CD8-positive, alpha-beta T cell (primary cell): ENCODE measurements at regions of chr19 and their contacts with region 1.

Region 1: DNA sequence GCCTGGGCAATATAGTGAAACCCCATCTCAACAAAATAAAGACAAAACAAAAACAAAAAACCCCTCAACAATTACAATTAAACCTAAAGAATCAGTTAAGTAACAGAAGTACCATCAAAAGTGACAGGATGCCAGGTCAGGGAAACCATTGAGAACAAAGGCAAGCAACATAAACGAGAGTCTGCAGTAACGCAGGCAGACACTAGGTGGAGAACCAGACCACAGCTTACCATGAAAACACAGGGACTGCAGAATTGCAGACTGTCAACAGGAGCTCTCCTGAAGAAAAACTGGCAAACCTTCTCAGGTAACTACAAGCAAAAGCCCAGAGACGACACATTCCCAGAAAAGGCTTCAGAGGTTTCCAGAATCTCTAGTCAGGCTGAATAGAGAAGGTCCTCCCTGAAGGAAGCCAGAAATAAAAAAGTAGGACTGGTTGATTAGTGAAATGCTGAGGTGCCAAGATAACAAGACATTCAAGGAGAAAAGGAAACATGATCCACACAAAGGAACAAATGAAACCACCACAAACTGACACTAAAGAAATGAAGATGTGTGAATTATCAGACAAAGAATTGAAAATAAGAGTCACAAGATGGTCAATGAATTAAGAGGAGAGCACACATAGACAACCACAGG is 2.2 kb upstream of the ZNF665 start:
- DNase-seq: peak; percentile 48 to 86 (median 75)
- ATAC-seq: peak; percentile 50
- H3K4me3 ChIP-seq: no peak overlapping the region
- H3K4me3 Mint-ChIP-seq: peak overlapping the region; percentile 19
- H3K27ac ChIP-seq: no peak overlapping the region
- H3K27ac Mint-ChIP-seq: peak overlapping the region; percentile 24
- H3K4me1 ChIP-seq: peaks cover 16% of the 10 kb centered on the region
- H3K4me1 Mint-ChIP-seq: peaks cover 48% of the 10 kb centered on the region
- H3K27me3 ChIP-seq: no peaks in the 10 kb centered on the region
- H3K27me3 Mint-ChIP-seq: no peaks in the 10 kb centered on the region
- CTCF ChIP-seq: peak; percentile 90

Region 2: GRCh38 chr19:52942386-52943133 is 252.8 kb before region 1 on chr19:
- CTCF ChIA-PET with region 1: no interaction called
- POLR2A ChIA-PET with region 1: no interaction called
- intact Hi-C with region 1: loop called in 1 of 2 experiments (anchors 5 kb)
- DNase-seq: peak; percentile 91 to 97 (median 95)
- ATAC-seq: peak; percentile 99
- H3K4me3 ChIP-seq: peak overlapping the region; percentile 88 to 91
- H3K4me3 Mint-ChIP-seq: peak overlapping the region; percentile 95
- H3K27ac ChIP-seq: peak overlapping the region; percentile 66 to 86
- H3K27ac Mint-ChIP-seq: peak overlapping the region; percentile 93
- H3K4me1 ChIP-seq: peaks cover 7% of the 10 kb centered on the region
- H3K4me1 Mint-ChIP-seq: peaks cover 28% of the 10 kb centered on the region
- H3K27me3 ChIP-seq: no peaks in the 10 kb centered on the region
- H3K27me3 Mint-ChIP-seq: no peaks in the 10 kb centered on the region
- CTCF ChIP-seq: no peak

Region 3: GRCh38 chr19:52993323-52994178 is 201.8 kb before region 1 on chr19:
- CTCF ChIA-PET with region 1: interaction called, 3 read pairs
- POLR2A ChIA-PET with region 1: no interaction called
- intact Hi-C with region 1: loop called (anchors 5 kb)
- DNase-seq: peak; percentile 64 to 84 (median 77)
- ATAC-seq: peak; percentile 96
- H3K4me3 ChIP-seq: peak overlapping the region; percentile 38 to 65
- H3K4me3 Mint-ChIP-seq: peak overlapping the region; percentile 90
- H3K27ac ChIP-seq: no peak overlapping the region
- H3K27ac Mint-ChIP-seq: peak overlapping the region; percentile 60
- H3K4me1 ChIP-seq: peaks cover 6% of the 10 kb centered on the region
- H3K4me1 Mint-ChIP-seq: peaks cover 23% of the 10 kb centered on the region
- H3K27me3 ChIP-seq: no peaks in the 10 kb centered on the region
- H3K27me3 Mint-ChIP-seq: peaks cover 4% of the 10 kb centered on the region
- CTCF ChIP-seq: peak; percentile 81

Region 4: DNA sequence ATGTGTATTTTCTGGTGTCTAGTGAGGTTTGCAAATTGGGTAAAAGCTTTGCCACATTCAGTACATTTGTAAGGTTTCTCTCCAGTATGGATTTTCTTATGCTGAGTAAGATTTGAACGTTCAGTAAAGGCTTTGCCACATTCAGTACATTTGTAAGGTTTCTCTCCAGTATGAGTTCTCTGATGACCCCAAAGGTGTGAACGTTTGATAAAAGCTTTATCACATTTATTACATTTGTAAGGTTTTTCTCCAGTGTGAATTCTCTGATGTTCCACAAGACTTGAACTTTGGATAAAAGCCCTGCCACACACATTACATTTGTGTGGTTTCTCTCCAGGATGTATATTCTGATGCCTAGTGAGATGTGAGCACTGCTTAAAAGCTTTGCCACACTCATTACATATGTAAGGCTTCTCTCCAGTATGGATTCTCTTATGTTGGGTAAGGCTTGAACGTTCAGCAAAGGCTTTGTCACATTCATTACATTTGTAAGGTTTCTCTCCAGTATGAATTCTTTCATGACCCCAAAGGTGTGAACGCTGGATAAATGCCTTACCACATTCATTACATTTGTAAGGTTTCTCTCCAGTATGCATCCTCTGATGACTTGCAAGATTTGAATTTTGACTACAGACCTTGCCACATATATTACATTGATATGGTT is 41.9 kb after region 1 on chr19:
- CTCF ChIA-PET with region 1: no interaction called
- POLR2A ChIA-PET with region 1: no interaction called
- intact Hi-C with region 1: no loop called
- DNase-seq: no peak
- ATAC-seq: no peak
- H3K4me3 ChIP-seq: no peak overlapping the region
- H3K4me3 Mint-ChIP-seq: no peak overlapping the region
- H3K27ac ChIP-seq: no peak overlapping the region
- H3K27ac Mint-ChIP-seq: no peak overlapping the region
- H3K4me1 ChIP-seq: no peaks in the 10 kb centered on the region
- H3K4me1 Mint-ChIP-seq: no peaks in the 10 kb centered on the region
- H3K27me3 ChIP-seq: no peaks in the 10 kb centered on the region
- H3K27me3 Mint-ChIP-seq: no peaks in the 10 kb centered on the region
- CTCF ChIP-seq: no peak

Region 5: GRCh38 chr19:53254411-53255341 is 59.3 kb after region 1 on chr19 and contains the start of gene ZNF677:
- CTCF ChIA-PET with region 1: no interaction called
- POLR2A ChIA-PET with region 1: no interaction called
- intact Hi-C with region 1: loop called (anchors 1 to 5 kb)
- DNase-seq: peak; percentile 60 to 90 (median 82)
- ATAC-seq: peak; percentile 99
- H3K4me3 ChIP-seq: peak within 1 kb of the TSS; percentile 75 to 98
- H3K4me3 Mint-ChIP-seq: peak within 1 kb of the TSS; percentile 84
- H3K27ac ChIP-seq: peak within 1 kb of the TSS in 1 of 2 experiments; percentile 75
- H3K27ac Mint-ChIP-seq: peak within 1 kb of the TSS; percentile 81
- H3K4me1 ChIP-seq: peaks cover 11% of the 10 kb centered on the region
- H3K4me1 Mint-ChIP-seq: peaks cover 9% of the 10 kb centered on the region
- H3K27me3 ChIP-seq: no peaks in the 10 kb centered on the region
- H3K27me3 Mint-ChIP-seq: no peaks in the 10 kb centered on the region
- CTCF ChIP-seq: no peak
- total RNA-seq, gene ZNF677: 7.8 to 8.3 TPM

Region 6: DNA sequence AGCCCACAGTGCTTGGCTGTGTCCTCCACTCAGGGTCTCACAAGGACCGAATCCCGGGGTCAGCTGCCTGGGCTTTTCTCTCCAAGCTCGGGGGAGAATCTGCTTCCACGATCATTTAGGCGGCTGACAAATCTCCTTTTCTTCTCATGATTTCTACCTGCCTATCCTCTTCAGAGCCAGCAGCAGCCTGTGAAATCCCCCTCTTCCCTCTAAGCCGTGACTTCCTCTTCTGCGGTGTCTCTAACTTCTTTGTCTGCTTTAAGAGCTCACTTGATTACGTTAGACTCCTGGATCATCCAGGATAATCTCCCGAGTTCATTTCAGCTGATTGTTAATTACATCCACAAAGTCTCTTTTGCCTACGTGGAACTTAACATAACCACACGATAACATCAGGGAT is 115.7 kb after region 1 on chr19:
- CTCF ChIA-PET with region 1: no interaction called
- POLR2A ChIA-PET with region 1: no interaction called
- intact Hi-C with region 1: no loop called
- DNase-seq: no peak
- ATAC-seq: no peak
- H3K4me3 ChIP-seq: no peak overlapping the region
- H3K4me3 Mint-ChIP-seq: no peak overlapping the region
- H3K27ac ChIP-seq: no peak overlapping the region
- H3K27ac Mint-ChIP-seq: no peak overlapping the region
- H3K4me1 ChIP-seq: no peaks in the 10 kb centered on the region
- H3K4me1 Mint-ChIP-seq: peaks cover 3% of the 10 kb centered on the region
- H3K27me3 ChIP-seq: peaks cover 0 to 3% of the 10 kb centered on the region in 2 experiments
- H3K27me3 Mint-ChIP-seq: peaks cover 49% of the 10 kb centered on the region
- CTCF ChIP-seq: no peak

Region 7: GRCh38 chr19:53357821-53358581 is 162.6 kb after region 1 on chr19:
- CTCF ChIA-PET with region 1: interaction called, 23 read pairs
- POLR2A ChIA-PET with region 1: no interaction called
- intact Hi-C with region 1: loop called in 1 of 2 experiments (anchors 1 kb)
- DNase-seq: no peak
- ATAC-seq: no peak
- H3K4me3 ChIP-seq: no peak overlapping the region
- H3K4me3 Mint-ChIP-seq: no peak overlapping the region
- H3K27ac ChIP-seq: no peak overlapping the region
- H3K27ac Mint-ChIP-seq: no peak overlapping the region
- H3K4me1 ChIP-seq: no peaks in the 10 kb centered on the region
- H3K4me1 Mint-ChIP-seq: no peaks in the 10 kb centered on the region
- H3K27me3 ChIP-seq: no peaks in the 10 kb centered on the region
- H3K27me3 Mint-ChIP-seq: no peaks in the 10 kb centered on the region
- CTCF ChIP-seq: no peak

Region 8: DNA sequence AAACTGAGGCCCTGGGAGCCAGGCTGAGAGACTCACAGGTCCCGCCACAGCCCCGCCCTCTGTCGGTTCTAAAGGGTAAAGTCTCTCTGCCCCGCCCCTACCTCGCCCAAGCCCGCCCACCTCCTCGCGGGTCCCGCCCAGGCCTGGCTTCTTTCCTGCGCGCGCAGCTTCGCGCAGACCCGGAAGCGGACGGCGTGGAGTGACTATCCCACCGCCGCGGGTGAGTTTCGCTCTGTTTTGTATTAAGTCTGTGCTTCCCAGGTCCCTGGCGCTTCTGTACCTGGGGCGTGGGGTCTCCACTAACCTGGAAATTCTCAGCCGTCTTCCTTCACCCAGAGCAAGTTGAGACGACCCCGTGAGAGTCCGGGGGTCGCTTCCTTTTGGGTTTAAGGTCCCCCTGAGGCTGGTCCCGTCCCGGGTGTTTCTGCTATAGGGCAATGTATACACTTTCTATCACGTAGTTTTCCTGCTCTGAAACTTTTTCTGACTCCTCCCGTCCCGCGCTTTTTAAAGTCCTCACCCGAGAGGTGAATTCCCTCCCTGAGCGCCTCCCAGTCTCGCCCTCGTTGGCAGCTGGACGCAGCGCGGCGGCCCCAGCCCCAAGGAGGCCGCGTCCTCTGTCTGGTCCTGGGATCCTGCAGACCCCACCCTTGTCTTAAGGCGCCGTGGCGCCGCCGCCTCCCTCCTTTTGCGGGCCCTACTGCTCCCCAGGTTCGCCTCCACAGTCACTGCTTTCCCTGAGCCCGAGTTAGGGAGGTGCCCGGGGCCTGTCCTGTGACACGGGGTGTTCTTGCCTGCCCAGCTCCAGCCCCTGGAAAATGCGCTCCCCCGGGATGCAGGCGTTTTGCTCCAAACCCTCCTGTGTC is 199.8 kb after region 1 on chr19 and contains the start of gene ZNF765:
- CTCF ChIA-PET with region 1: no interaction called
- POLR2A ChIA-PET with region 1: no interaction called
- intact Hi-C with region 1: loop called (anchors 1 kb)
- DNase-seq: peak; percentile 94 to 99 (median 97)
- ATAC-seq: peak; percentile 99
- H3K4me3 ChIP-seq: peak within 1 kb of the TSS; percentile 86 to 97
- H3K4me3 Mint-ChIP-seq: peak within 1 kb of the TSS; percentile 96
- H3K27ac ChIP-seq: peak within 1 kb of the TSS; percentile 78 to 84
- H3K27ac Mint-ChIP-seq: peak within 1 kb of the TSS; percentile 96
- H3K4me1 ChIP-seq: peaks cover 12% of the 10 kb centered on the region
- H3K4me1 Mint-ChIP-seq: peaks cover 36% of the 10 kb centered on the region
- H3K27me3 ChIP-seq: no peaks in the 10 kb centered on the region
- H3K27me3 Mint-ChIP-seq: no peaks in the 10 kb centered on the region
- CTCF ChIP-seq: peak; percentile 53
- total RNA-seq, gene ZNF765: 9.6 to 12.4 TPM

Region 9: DNA sequence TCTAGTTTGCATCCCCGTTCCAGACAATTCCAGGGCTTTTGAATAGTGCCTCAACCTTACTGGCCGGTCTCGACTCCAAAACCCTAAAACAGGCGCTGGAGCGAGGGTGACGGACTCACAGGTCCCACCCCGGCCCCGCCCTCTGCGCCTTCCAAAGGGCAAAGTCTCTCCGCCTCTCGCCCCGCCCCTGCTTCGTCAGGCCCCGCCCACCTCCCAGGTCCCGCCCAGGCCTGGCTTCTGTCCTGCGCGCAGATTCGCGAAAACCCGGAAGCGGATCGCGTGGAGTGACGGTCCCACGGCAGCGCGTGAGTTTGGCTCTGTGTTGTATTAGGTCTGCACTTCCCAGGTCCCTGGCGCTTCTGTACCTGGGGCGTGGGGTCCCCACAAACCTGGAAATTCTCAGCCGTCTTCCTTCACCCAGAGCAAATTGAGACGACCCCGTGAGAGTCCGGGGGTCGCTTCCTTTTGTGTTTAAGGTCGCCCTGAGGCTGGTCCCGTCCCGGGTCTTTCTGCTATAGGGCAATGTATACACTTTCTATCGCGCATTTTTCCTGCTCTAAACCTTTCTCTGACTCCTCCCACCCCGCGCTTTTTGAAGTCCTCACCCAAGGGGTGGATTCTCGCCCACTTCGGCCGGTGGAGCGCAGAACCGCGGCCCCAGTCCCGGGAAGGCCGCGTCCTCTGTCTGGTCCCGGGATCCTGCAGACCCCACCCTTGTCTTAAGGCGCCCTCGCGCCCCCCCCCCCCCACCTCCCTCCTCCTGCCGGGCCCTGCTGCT is 272.3 kb after region 1 on chr19 and contains the start of gene ZNF813:
- CTCF ChIA-PET with region 1: no interaction called
- POLR2A ChIA-PET with region 1: no interaction called
- intact Hi-C with region 1: loop called in 1 of 2 experiments (anchors 1 kb)
- DNase-seq: peak; percentile 93 to 98 (median 95)
- ATAC-seq: peak; percentile 98
- H3K4me3 ChIP-seq: peak within 1 kb of the TSS; percentile 73 to 91
- H3K4me3 Mint-ChIP-seq: peak within 1 kb of the TSS; percentile 92
- H3K27ac ChIP-seq: peak within 1 kb of the TSS; percentile 64 to 79
- H3K27ac Mint-ChIP-seq: peak within 1 kb of the TSS; percentile 89
- H3K4me1 ChIP-seq: peaks cover 7% of the 10 kb centered on the region
- H3K4me1 Mint-ChIP-seq: peaks cover 26% of the 10 kb centered on the region
- H3K27me3 ChIP-seq: no peaks in the 10 kb centered on the region
- H3K27me3 Mint-ChIP-seq: peaks cover 18% of the 10 kb centered on the region
- CTCF ChIP-seq: no peak
- total RNA-seq, gene ZNF813: 3.8 TPM